ENCODE measurements at regions of chr5 and their contacts with region 1.

Region 1: GRCh38 chr5:163347671-163348070 is 89.7 kb upstream of the CCNG1 start:
- DNase-seq: peak; percentile 27 to 69
- H3K4me3 ChIP-seq: no peak overlapping the region
- H3K27ac ChIP-seq: no peak overlapping the region
- H3K4me1 ChIP-seq: peaks cover 0 to 4% (median 0%) of the 10 kb centered on the region in 4 experiments; a peak in 2 of 7 replicates
- H3K27me3 ChIP-seq: no peaks in the 10 kb centered on the region
- CTCF ChIP-seq: peak in 2 of 3 experiments; percentile 76; a peak in 3 of 4 replicates
- EP300 ChIP-seq: no peak
- POLR2A ChIP-seq: no peak
- RAD21 ChIP-seq: peak; percentile 95

Region 2: DNA sequence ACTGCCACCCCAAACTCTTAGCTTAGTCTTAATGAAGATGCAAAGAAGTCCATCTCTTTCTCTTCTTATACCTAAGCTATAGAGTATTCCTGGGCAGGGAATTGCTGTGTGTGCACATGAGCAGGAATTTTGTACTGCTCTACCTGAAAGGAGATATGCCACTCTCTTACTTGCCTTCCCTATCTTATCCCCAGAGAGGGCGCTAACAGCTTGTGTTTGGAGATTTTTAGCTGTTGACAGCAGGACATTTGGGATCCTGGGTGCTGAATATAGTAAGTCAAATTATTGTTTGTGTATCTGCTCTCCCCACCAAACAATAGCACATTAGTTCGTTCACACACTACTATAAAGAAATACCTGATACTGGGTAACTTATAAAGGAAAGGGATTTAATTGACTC is 1120.6 kb before region 1 on chr5:
- CTCF ChIA-PET with region 1: interaction called, 16 read pairs
- POLR2A ChIA-PET with region 1: no interaction called
- DNase-seq: no peak
- H3K4me3 ChIP-seq: no peak overlapping the region
- H3K27ac ChIP-seq: no peak overlapping the region
- H3K4me1 ChIP-seq: no peaks in the 10 kb centered on the region
- H3K27me3 ChIP-seq: no peaks in the 10 kb centered on the region
- CTCF ChIP-seq: peak in 2 of 3 experiments; percentile 68 to 71; a peak in 3 of 4 replicates
- EP300 ChIP-seq: no peak
- POLR2A ChIP-seq: no peak
- RAD21 ChIP-seq: peak; percentile 91 to 94

Region 3: DNA sequence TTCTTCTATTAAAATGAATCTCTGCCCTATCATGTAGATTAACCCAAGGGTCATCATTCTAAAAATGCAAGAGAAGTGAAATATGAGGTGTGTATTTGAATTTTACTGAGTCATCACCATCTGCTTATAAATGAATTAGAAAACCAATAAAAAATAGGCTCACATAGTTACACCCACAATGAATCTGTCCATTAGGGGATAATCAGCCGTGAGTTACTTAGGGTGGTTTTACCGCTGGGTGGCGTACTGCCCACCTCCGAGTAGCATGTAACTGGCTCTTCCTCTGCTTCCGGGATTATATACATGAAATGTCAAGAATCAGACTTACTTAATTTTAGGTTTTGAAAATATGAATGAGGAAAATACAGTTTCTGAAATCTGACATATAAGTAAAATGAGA is 243.2 kb before region 1 on chr5:
- CTCF ChIA-PET with region 1: interaction called, 41 read pairs
- POLR2A ChIA-PET with region 1: no interaction called
- DNase-seq: peak; percentile 10 to 67
- H3K4me3 ChIP-seq: no peak overlapping the region
- H3K27ac ChIP-seq: no peak overlapping the region
- H3K4me1 ChIP-seq: no peaks in the 10 kb centered on the region; a peak in 1 of 7 replicates
- H3K27me3 ChIP-seq: no peaks in the 10 kb centered on the region
- CTCF ChIP-seq: peak; percentile 76 to 83 (median 81)
- EP300 ChIP-seq: no peak
- POLR2A ChIP-seq: no peak
- RAD21 ChIP-seq: peak; percentile 67 to 74

Region 4: GRCh38 chr5:163306421-163306820 is 41.2 kb before region 1 on chr5:
- CTCF ChIA-PET with region 1: interaction called, 55 read pairs
- POLR2A ChIA-PET with region 1: no interaction called
- DNase-seq: no peak
- H3K4me3 ChIP-seq: no peak overlapping the region
- H3K27ac ChIP-seq: no peak overlapping the region
- H3K4me1 ChIP-seq: 0 out of 7 replicates have a peak, but pooled peaks cover 0 to 1% (median 0%) of the 10 kb centered on the region in 4 experiments
- H3K27me3 ChIP-seq: no peaks in the 10 kb centered on the region
- CTCF ChIP-seq: peak in 2 of 3 experiments; percentile 23 to 57; a peak in 2 of 4 replicates
- EP300 ChIP-seq: no peak
- POLR2A ChIP-seq: no peak
- RAD21 ChIP-seq: peak; percentile 30 to 43; a peak in 3 of 4 replicates

Region 5: DNA sequence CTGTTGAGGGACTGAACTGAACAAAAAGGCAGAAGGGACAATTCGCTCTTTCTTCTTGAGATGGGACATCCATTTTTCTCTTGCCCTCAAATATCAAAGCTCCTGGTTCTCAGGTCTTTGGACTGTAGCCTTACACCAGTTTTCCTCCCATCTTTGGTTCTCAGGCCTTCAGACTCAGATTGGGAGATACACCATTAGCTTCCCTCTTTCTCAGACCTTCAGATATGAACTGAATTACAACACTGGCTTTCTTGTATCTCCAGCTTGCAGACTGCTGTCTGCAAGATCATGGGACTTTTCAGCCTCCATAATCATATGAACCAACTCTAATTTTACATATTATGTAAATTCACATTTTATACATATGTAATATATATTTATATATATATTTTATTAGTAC is 77.2 kb after region 1 on chr5:
- CTCF ChIA-PET with region 1: no interaction called
- POLR2A ChIA-PET with region 1: no interaction called
- DNase-seq: no peak
- H3K4me3 ChIP-seq: no peak overlapping the region
- H3K27ac ChIP-seq: no peak overlapping the region
- H3K4me1 ChIP-seq: no peaks in the 10 kb centered on the region
- H3K27me3 ChIP-seq: no peaks in the 10 kb centered on the region
- CTCF ChIP-seq: no peak
- EP300 ChIP-seq: no peak
- POLR2A ChIP-seq: no peak
- RAD21 ChIP-seq: no peak

Region 6: DNA sequence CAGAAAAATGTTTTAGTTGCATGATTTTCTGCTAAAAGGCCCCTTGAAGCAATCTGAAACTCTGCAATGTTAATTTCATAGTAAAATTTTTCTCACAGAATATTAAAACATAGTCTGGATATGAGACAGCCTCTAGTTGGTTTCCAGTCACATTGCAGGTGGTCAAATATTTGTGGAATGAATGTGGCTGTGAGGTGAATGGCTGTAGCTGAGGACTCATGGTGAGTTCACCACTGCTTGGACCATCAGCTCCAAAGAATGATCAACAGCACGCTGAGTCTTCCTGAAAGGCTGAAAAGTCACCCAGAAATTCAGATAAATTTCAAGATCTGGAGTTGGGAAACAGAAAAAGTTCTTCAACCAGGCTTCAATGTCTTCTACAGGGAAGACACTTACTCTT is 237.5 kb after region 1 on chr5:
- CTCF ChIA-PET with region 1: no interaction called
- POLR2A ChIA-PET with region 1: no interaction called
- DNase-seq: no peak
- H3K4me3 ChIP-seq: no peak overlapping the region
- H3K27ac ChIP-seq: no peak overlapping the region
- H3K4me1 ChIP-seq: no peaks in the 10 kb centered on the region
- H3K27me3 ChIP-seq: no peaks in the 10 kb centered on the region
- CTCF ChIP-seq: no peak
- EP300 ChIP-seq: no peak
- POLR2A ChIP-seq: no peak
- RAD21 ChIP-seq: no peak

Measured in H1 (cell line).